Left colon (tissue), 2 donors: ENCODE measurements at regions of chr7 and their contacts with region 1.

Region 1: GRCh38 chr7:116271963-116272839 is 61.9 kb downstream of the TES start:
- DNase-seq: peak in 1 of 2 donors; percentile 75
- ATAC-seq: peak; percentile 57

Region 2: DNA sequence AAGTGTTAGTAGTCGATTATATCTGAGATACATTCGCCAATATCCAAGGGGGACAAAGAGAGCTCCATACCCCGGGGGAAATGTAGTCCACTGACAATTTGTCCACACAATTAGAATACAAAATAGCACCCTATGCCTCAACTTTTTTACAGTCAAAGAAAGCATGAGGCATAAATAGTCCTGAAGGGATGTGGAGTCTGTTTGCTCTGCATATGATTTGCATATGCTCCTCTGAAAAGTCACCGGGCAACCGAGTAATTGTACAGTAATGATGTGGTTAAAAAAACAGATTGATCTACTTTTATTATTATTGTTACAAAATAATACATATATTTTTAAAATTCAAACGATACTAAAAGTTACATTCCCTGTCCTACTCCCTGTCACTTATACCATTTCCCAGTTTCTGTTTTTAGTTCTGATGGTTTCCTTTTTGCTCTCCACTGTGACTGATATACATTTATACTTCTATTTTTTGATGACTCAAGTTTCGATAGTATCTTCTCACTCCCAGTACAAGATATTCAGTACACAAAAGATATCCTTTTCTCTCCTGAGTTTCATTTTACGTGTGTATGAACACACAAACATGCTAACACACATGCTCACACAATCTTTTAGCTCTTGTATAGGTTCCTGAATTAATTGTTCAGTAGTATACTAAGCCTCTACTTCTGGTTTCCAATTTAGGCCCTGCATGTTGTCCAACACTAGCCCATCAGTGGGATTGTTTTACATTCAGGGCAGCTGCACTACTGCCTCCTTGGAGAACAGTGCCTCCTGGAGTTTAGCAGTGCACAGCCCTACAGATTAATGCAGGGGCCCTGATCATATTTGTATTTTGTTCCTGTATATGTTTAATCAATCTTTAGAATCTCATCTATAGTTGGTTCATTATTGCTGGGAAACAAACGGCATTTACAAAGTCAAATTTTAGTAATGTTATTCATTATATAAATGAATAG is 69.0 kb after region 1 on chr7:
- intact Hi-C with region 1: loop called in 1 of 2 experiments (anchors 10 kb)
- DNase-seq: no peak
- ATAC-seq: no peak

Region 3: DNA sequence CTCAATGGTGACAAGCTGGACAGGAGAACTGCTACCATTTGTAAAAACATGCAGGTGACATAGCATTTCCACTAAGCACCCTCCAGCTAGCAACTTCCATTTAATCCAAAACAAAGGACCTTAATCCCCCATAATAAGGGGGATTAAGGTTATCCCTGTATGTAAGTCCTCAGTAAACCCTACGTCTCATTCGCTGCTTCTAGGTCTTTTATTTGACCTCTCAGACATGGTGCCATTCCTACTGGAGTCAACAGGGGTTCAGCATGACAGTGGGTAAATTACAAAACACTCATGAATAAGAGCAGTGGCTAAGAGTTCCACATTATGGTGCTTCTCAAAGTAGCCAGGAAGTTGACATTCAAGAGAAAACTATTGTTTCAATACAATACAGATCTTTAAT is 105.5 kb after region 1 on chr7:
- intact Hi-C with region 1: no loop called
- DNase-seq: no peak
- ATAC-seq: no peak

Region 4: DNA sequence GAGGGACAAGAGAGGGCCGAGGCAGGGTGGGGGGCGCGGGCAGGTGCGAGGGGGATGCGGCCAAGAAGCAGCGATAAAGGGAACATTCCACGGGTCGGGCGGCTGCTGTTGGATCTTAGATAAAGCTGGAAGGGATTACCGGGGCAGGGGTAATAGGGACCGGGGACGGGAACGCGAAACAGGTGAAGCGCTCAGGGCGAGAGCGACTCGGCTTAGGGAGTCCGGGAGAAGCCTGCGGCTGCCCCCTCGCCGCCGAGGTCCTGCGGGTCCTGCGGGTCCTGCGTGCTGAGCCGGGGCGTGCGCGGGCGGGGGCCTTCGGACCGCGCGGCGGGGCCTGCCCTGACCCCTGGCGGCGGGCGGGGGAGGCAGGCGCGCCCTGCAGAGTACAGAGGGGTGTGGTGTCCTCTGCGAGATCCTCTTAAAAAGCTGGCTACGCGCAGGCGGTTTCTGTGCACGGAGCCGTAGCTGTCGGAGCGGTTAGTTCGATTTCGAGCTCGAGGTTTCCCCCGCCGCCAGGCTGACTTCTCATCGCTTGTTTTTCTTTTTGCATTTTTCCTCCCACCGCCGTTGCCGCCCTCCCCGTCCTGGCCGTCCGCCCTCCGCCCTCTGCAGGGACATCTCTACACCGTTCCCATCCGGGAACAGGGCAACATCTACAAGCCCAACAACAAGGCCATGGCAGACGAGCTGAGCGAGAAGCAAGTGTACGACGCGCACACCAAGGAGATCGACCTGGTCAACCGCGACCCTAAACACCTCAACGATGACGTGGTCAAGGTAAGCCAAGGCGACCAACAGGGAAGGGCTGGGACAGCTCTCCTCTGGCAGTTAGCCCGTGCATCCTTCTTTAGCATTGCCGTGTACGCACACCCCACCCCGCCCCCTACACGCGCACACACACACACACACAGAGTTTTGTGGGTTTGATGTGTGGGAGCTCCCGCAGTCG is 254.0 kb after region 1 on chr7:
- intact Hi-C with region 1: loop called in 1 of 2 experiments (anchors 5 kb)
- DNase-seq: peak; percentile 72 to 74
- ATAC-seq: peak; percentile 94